ENCODE measurements at regions of chr20 and their contacts with region 1.

Region 1: GRCh38 chr20:44747166-44748004 is 1.7 kb downstream of the KCNK15 start:
- DNase-seq: peak; percentile 61 to 94 (median 84)
- H3K4me3 ChIP-seq: peak overlapping the region in 1 of 59 donors; percentile 2
- H3K27ac ChIP-seq: peak overlapping the region in 5 of 59 donors; percentile 1 to 50 (median 31)
- H3K27me3 ChIP-seq: peaks cover 0 to 13% (median 0%) of the 10 kb centered on the region in 45 donors
- CTCF ChIP-seq: peak; percentile 52 to 83 (median 72)

Region 2: DNA sequence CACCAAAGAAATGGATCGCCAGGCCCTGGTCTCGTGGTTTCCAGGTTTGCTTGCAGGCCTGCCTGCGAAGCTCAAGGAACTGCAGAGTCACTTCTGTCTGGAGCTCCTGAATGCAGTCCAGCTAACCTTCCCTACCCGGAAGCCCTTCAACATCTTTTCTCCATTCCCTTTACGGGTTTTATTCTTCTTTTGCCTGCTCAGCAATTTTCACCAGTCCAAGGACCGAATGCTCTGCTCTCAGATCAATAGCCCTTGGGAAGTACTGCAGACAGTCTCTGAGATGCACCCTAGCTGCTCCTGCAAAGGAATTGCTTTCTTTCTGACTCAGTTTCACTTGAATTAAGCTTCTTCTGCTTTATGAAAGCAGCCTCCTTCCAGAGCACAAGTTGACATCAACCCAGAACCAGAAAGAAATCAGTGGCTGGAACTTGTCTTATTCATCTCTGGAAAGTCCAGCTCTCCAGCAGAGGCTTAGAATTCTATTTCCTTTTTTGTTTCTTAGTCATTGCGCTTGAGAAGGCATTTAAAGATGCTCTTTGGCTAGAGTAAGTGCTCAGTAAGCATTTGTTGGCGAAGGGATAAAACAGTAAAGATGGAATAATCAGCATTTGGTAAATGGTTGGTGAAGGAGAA is 119.4 kb after region 1 on chr20:
- intact Hi-C with region 1: loop called (anchors 1 to 2 kb)
- DNase-seq: no peak
- H3K4me3 ChIP-seq: peak overlapping the region in 13 of 59 donors; percentile 36 to 63 (median 49)
- H3K27ac ChIP-seq: no peak overlapping the region
- H3K27me3 ChIP-seq: no peaks in the 10 kb centered on the region
- CTCF ChIP-seq: no peak

Measured in dorsolateral prefrontal cortex (tissue), 120 donors.